ENCODE measurements at regions of chr2 and their contacts with region 1.

Region 1: DNA sequence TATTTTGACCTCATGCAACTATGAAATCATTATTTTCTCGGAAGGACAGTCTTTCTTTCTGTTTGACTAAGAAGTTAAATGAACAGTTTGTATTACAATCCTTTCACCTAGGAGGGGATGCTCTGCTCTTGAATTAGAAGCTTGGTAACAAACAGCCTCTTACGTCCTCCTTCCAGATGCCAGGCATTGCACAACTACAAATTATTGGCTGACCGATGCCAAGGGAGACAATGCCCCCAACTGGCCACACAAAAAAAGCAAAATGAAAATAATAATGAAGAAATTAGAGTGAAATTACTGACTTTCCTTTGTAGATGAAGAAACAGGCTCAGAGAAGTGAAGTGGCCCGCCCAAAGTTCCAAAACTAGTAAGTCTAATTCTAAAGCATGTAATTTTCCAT is 177.9 kb downstream of the CYRIA start:
- DNase-seq: peak; percentile 73
- H3K4me3 ChIP-seq: no peak overlapping the region
- H3K27ac ChIP-seq: no peak overlapping the region
- H3K4me1 ChIP-seq: no peaks in the 10 kb centered on the region
- H3K27me3 ChIP-seq: no peaks in the 10 kb centered on the region
- CTCF ChIP-seq: no peak; the same call in 1 of the 2 replicates
- EP300 ChIP-seq: no peak
- RAD21 ChIP-seq: peak; percentile 99

Region 2: GRCh38 chr2:15630121-15630977 is 857.3 kb before region 1 on chr2:
- CTCF ChIA-PET with region 1: interaction called, 51 read pairs
- POLR2A ChIA-PET with region 1: no interaction called
- DNase-seq: no peak
- H3K4me3 ChIP-seq: no peak overlapping the region
- H3K27ac ChIP-seq: no peak overlapping the region; a peak in 1 of 4 replicates
- H3K4me1 ChIP-seq: peaks cover 0 to 8% of the 10 kb centered on the region in 2 experiments; a peak in 1 of 4 replicates
- H3K27me3 ChIP-seq: no peaks in the 10 kb centered on the region
- CTCF ChIP-seq: no peak
- EP300 ChIP-seq: no peak
- RAD21 ChIP-seq: no peak

Region 3: GRCh38 chr2:15636972-15637785 is 850.5 kb before region 1 on chr2:
- CTCF ChIA-PET with region 1: interaction called, 51 read pairs
- POLR2A ChIA-PET with region 1: no interaction called
- DNase-seq: peak; percentile 87
- H3K4me3 ChIP-seq: no peak overlapping the region; a peak in 1 of 4 replicates
- H3K27ac ChIP-seq: peak overlapping the region in 1 of 2 experiments; percentile 70; a peak in 2 of 4 replicates
- H3K4me1 ChIP-seq: peaks cover 5 to 8% of the 10 kb centered on the region in 2 experiments; a peak in 1 of 4 replicates
- H3K27me3 ChIP-seq: no peaks in the 10 kb centered on the region
- CTCF ChIP-seq: peak; percentile 98
- EP300 ChIP-seq: no peak
- RAD21 ChIP-seq: peak; percentile 100

Region 4: GRCh38 chr2:15642011-15642814 is 845.5 kb before region 1 on chr2:
- CTCF ChIA-PET with region 1: interaction called, 51 read pairs
- POLR2A ChIA-PET with region 1: no interaction called
- DNase-seq: no peak
- H3K4me3 ChIP-seq: no peak overlapping the region
- H3K27ac ChIP-seq: no peak overlapping the region
- H3K4me1 ChIP-seq: peaks cover 0 to 5% of the 10 kb centered on the region in 2 experiments; a peak in 1 of 4 replicates
- H3K27me3 ChIP-seq: no peaks in the 10 kb centered on the region
- CTCF ChIP-seq: no peak
- EP300 ChIP-seq: no peak
- RAD21 ChIP-seq: no peak

Region 5: DNA sequence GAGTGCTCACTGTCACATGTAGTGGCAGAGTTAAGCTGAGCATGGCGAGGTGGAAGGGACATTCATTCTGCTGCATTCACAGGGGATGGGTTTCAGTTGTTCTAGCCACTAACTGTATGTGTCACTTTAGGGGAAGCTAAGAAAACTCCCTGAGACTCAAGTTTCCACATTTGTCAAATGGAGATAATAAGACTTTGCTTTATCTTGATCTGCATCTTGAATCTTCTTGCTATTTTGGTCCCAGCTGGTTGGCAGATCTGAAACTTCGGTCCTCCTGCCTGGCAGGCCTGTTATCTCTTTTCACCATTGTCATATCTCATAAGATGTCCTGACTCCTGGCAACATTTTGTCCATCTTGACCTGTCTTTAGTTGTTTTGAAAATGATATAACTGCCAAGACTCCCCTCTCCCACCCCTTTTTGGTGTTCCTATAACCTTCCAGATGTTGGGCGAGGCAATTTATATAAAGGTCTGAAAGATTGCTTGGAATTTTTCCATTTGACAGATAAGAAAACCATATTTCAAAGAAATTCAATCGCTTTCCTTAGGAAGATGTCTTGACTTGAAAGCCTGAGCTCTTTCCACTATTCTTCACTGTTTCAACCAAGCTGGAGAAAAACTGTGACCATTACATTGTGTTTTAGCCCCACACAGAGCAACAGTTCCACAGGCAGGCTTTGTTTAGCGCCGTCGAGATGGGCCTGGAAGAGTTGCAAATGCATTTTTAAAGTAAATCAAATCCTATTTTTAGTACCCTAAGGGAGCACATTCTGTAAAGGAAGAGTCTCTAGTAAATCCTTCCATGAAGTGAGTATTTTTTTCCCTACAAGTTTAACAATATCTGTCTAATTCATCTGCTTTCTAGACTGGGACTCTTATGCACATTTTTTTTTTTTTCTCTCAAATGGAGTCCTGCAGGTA is 513.9 kb before region 1 on chr2:
- CTCF ChIA-PET with region 1: no interaction called
- POLR2A ChIA-PET with region 1: no interaction called
- DNase-seq: no peak
- H3K4me3 ChIP-seq: no peak overlapping the region
- H3K27ac ChIP-seq: no peak overlapping the region
- H3K4me1 ChIP-seq: no peaks in the 10 kb centered on the region
- H3K27me3 ChIP-seq: no peaks in the 10 kb centered on the region
- CTCF ChIP-seq: no peak
- EP300 ChIP-seq: no peak
- RAD21 ChIP-seq: no peak

Region 6: DNA sequence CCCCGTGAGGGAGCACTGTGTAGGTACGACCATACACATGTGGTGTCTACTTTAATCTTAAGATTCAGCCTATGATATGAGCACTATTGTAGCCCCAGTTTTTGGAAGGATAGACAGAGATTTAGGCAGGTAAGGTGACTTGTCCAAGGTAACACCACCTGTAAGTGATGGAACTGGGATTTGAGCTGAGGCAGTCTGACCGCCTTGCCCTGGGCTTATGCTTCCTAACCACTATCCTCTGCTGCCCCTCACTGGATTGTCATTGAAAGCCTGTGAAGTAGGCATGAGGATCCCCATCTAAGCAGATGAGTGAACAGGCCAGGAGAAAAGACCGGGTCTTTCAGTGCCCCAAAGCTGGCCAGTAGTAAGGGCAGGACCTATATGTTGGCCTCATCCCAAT is 165.8 kb before region 1 on chr2:
- CTCF ChIA-PET with region 1: interaction called, 13 read pairs
- POLR2A ChIA-PET with region 1: interaction called, 3 read pairs
- DNase-seq: peak; percentile 69
- H3K4me3 ChIP-seq: no peak overlapping the region
- H3K27ac ChIP-seq: no peak overlapping the region
- H3K4me1 ChIP-seq: peaks cover 0 to 61% of the 10 kb centered on the region in 2 experiments; a peak in 2 of 4 replicates
- H3K27me3 ChIP-seq: no peaks in the 10 kb centered on the region
- CTCF ChIP-seq: no peak
- EP300 ChIP-seq: no peak
- RAD21 ChIP-seq: peak; percentile 74

Region 7: GRCh38 chr2:16386031-16386430 is 101.7 kb before region 1 on chr2:
- CTCF ChIA-PET with region 1: no interaction called
- POLR2A ChIA-PET with region 1: no interaction called
- DNase-seq: no peak
- H3K4me3 ChIP-seq: no peak overlapping the region
- H3K27ac ChIP-seq: no peak overlapping the region
- H3K4me1 ChIP-seq: peaks cover 0 to 5% of the 10 kb centered on the region in 2 experiments; a peak in 1 of 4 replicates
- H3K27me3 ChIP-seq: no peaks in the 10 kb centered on the region
- CTCF ChIP-seq: no peak
- EP300 ChIP-seq: no peak
- RAD21 ChIP-seq: no peak

Region 8: GRCh38 chr2:16470936-16471490 is 16.7 kb before region 1 on chr2:
- CTCF ChIA-PET with region 1: interaction called, 14 read pairs
- POLR2A ChIA-PET with region 1: no interaction called
- DNase-seq: no peak
- H3K4me3 ChIP-seq: no peak overlapping the region
- H3K27ac ChIP-seq: no peak overlapping the region
- H3K4me1 ChIP-seq: no peaks in the 10 kb centered on the region
- H3K27me3 ChIP-seq: no peaks in the 10 kb centered on the region
- CTCF ChIP-seq: no peak
- EP300 ChIP-seq: no peak
- RAD21 ChIP-seq: no peak

Region 9: DNA sequence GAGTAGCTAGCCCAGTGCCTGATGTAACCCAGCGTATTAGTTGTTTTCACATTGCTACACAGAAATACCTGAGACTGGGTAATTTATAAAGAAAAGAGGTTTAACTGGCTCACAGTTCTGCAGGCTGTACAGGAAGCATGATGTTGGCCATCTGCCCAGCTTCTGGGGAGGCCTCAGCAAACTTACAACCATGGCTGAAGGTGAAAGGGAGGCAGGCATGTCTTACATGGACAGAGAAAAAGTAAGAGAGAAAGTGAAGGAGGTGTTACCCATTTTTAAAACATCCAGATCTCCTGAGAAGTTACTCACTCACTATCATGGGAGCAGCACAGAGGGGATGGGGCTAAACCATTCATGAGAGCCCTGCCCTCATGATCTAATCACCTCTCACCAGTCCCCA is 184.1 kb after region 1 on chr2:
- CTCF ChIA-PET with region 1: no interaction called
- POLR2A ChIA-PET with region 1: no interaction called
- DNase-seq: no peak
- H3K4me3 ChIP-seq: no peak overlapping the region
- H3K27ac ChIP-seq: no peak overlapping the region
- H3K4me1 ChIP-seq: peaks cover 0 to 5% of the 10 kb centered on the region in 2 experiments; a peak in 2 of 4 replicates
- H3K27me3 ChIP-seq: no peaks in the 10 kb centered on the region
- CTCF ChIP-seq: no peak
- EP300 ChIP-seq: no peak
- RAD21 ChIP-seq: no peak

Measured in SK-N-SH (cell line).